ENCODE measurements at regions of chr4 and their contacts with region 1.

Region 1: DNA sequence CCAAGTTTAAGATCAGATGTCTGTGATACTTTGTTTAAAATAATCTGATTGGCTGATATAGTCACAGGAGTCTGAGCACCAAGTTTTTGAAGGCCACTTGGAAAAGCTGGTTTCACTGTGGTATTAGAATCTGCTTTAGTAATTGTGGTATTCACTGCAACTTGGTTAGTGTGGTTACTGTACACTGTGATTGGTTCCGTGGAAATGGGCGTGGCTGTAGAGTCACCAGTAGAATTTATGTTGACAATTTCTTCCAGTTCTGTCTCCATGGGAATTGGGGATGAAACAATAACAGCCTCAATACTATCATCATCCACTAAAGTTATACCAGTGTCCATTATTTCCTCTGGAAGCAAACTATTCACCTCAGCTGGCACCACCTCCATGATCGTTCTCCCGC is 26.2 kb downstream of the LIN54 start:
- DNase-seq: no peak
- CTCF ChIP-seq: no peak

Region 2: GRCh38 chr4:82968972-82969371 is 15.5 kb before region 1 on chr4:
- CTCF ChIA-PET with region 1: interaction called, 11 read pairs
- POLR2A ChIA-PET with region 1: no interaction called
- DNase-seq: peak; percentile 22
- CTCF ChIP-seq: no peak

Measured in GM10248 (cell line).